ENCODE measurements at regions of chr18 and their contacts with region 1.

Region 1: GRCh38 chr18:23619388-23619881 is 33.1 kb upstream of the NPC1 start:
- DNase-seq: peak; percentile 68
- ATAC-seq: peak; percentile 61

Region 2: GRCh38 chr18:23689031-23689615 is 69.7 kb after region 1 on chr18 and contains the start of gene LAMA3:
- intact Hi-C with region 1: loop called (anchors 5 kb)
- DNase-seq: peak; percentile 83
- ATAC-seq: peak; percentile 92
- total RNA-seq, gene LAMA3: 4.1 TPM

Region 3: GRCh38 chr18:23703057-23703986 is 83.9 kb after region 1 on chr18:
- intact Hi-C with region 1: loop called (anchors 1 kb)
- DNase-seq: no peak
- ATAC-seq: no peak

Region 4: GRCh38 chr18:23740105-23740830 is 120.8 kb after region 1 on chr18:
- intact Hi-C with region 1: no loop called
- DNase-seq: no peak
- ATAC-seq: peak; percentile 35

Region 5: DNA sequence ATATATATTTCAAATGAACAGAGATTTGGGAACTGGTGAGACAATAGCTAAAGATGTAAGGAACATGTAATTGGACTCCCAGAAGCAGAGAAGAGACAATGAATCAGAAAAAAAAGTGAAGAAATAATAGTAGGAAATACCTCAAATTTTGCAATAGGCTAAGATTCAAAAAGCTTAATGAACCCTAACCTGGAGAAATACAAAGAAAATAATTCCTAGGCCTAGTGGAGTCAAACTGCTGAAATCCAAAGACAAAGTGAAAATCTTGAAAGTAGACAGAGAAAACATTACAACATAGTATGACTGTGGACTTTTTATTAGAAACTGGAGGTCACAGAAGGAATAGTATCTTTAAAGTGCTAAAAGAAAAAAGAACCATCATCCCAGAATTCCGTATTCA is 146.5 kb after region 1 on chr18:
- intact Hi-C with region 1: no loop called
- DNase-seq: no peak
- ATAC-seq: no peak

Region 6: DNA sequence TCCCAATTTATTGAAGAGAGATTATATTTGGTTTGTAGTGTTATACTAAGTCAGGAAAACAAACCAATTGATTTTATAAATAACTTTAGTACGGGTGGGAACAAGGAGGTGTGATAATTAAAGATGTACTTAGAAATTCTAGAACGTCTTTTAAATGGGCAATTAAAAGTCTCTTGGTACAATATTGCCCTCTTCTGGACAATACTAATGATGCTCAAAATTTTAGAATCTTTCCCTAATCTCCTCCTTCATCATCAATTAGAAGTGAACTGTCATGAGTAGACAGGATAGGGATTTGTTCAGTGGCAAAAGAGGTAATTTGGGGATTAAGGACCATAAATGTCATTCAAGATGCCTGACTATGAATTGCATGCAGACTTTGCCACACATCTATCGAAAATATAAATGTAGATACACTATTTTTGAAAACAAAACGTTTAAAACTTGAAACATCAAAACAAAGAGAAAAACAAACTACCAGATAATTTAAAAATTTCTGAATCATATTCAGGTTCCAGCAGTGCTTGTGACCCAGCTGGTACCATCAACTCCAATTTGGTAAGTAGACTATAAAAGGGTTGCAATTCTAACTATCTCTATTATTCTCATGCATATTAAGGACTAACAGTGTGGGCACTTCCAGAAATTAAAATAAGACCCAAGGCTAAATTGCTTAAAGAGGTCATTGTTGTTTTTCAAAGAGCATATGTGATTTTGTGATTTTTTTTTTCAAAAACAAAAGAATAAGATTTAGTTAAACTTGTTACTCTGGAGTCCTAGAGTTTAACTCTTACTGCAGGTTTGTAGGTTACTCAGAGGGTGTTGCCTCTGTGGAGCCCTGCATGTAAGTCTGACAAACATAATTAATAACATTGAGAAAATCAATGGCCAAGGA is 193.4 kb after region 1 on chr18:
- intact Hi-C with region 1: loop called (anchors 2 kb)
- DNase-seq: no peak
- ATAC-seq: no peak